Sigmoid colon (tissue), 7 donors: ENCODE measurements at regions of chr12 and their contacts with region 1.

Region 1: GRCh38 chr12:98998697-98999299 is 353.7 kb downstream of the APAF1 start:
- DNase-seq: no peak
- H3K4me3 ChIP-seq: no peak overlapping the region
- H3K27ac ChIP-seq: no peak overlapping the region
- H3K4me1 ChIP-seq: no peaks in the 10 kb centered on the region
- H3K27me3 ChIP-seq: no peaks in the 10 kb centered on the region
- CTCF ChIP-seq: peak in 3 of 4 experiments; percentile 36 to 69 (median 58)
- EP300 ChIP-seq: no peak
- POLR2A ChIP-seq: no peak

Region 2: DNA sequence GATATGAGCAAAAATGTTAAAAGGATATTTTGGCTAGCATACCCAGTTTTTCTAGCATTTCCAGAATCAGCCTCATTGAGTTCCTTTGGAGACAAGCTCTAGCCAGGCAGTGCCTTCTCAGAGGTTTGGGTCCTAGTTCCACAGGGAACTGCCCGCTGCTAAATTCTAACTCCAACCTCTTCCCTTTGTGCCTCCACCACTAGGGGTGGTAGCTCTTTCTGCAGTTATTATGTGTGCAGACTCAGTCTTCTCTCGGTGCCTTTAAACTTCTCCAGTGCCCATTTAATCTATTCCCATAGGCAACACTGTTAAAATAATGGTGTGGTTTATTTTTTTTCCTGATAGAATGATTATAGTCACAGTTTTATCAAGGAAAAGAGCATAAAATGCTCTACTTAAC is 426.8 kb before region 1 on chr12:
- intact Hi-C with region 1: loop called (anchors 5 kb)
- DNase-seq: no peak
- H3K4me3 ChIP-seq: no peak overlapping the region
- H3K27ac ChIP-seq: no peak overlapping the region
- H3K4me1 ChIP-seq: peaks cover 0 to 2% (median 0%) of the 10 kb centered on the region in 4 donors
- H3K27me3 ChIP-seq: no peaks in the 10 kb centered on the region
- CTCF ChIP-seq: no peak
- EP300 ChIP-seq: no peak
- POLR2A ChIP-seq: no peak

Region 3: DNA sequence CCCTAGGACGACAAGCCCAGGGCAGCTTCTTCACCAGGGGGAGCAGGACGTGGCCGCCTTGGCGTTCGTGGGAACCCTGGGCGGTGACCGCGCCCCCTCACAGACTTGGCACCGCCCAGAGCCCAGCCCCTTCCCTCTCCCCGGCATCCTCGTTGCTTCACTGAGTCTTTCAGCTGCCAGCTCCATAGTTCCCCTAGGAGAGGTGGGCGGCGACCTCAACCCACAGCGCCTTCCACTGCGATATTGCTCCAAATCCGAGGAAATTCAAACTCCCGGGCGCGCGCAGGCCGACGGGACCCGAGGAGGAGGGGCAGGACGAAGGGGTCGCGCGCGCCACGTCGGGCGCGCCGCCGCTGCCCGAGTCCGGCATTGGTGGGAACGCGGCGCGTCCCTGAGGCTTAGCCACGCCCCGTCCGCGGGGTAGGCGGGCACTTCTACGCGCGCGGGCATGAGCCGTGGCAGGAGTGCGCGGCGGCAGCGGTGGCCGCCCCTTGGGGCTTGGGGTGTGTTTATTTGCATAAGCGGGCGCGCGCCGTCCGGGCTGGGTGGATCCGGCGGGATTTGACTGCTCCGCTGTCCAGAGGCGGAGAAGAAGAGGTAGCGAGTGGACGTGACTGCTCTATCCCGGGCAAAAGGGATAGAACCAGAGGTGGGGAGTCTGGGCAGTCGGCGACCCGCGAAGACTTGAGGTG is 353.9 kb before region 1 on chr12 and contains the starts of genes APAF1 and IKBIP:
- intact Hi-C with region 1: no loop called
- DNase-seq: peak; percentile 97
- H3K4me3 ChIP-seq: peak within 1 kb of the TSS; percentile 85 to 97 (median 92)
- H3K27ac ChIP-seq: peak within 1 kb of the TSS; percentile 86 to 93 (median 88)
- H3K4me1 ChIP-seq: peaks cover 0 to 33% (median 18%) of the 10 kb centered on the region in 4 donors
- H3K27me3 ChIP-seq: no peaks in the 10 kb centered on the region
- CTCF ChIP-seq: no peak
- EP300 ChIP-seq: no peak
- POLR2A ChIP-seq: peak; percentile 68 to 82
- total RNA-seq, gene APAF1: 6.2 to 14.6 (median 9.4) TPM
- total RNA-seq, gene IKBIP: 6.8 to 15.2 (median 10.8) TPM

Region 4: GRCh38 chr12:98698603-98699463 is 300.0 kb before region 1 on chr12:
- intact Hi-C with region 1: loop called (anchors 2 kb)
- DNase-seq: peak; percentile 71
- H3K4me3 ChIP-seq: no peak overlapping the region
- H3K27ac ChIP-seq: peak overlapping the region in 2 of 4 donors; percentile 3 to 30
- H3K4me1 ChIP-seq: peaks cover 0 to 19% (median 10%) of the 10 kb centered on the region in 4 donors
- H3K27me3 ChIP-seq: no peaks in the 10 kb centered on the region
- CTCF ChIP-seq: peak in 3 of 4 experiments; percentile 18 to 54 (median 49)
- EP300 ChIP-seq: no peak
- POLR2A ChIP-seq: no peak

Region 5: GRCh38 chr12:98725476-98726247 is 273.1 kb before region 1 on chr12:
- intact Hi-C with region 1: loop called (anchors 10 kb)
- DNase-seq: no peak
- H3K4me3 ChIP-seq: no peak overlapping the region
- H3K27ac ChIP-seq: no peak overlapping the region
- H3K4me1 ChIP-seq: peaks cover 0 to 5% (median 0%) of the 10 kb centered on the region in 4 donors
- H3K27me3 ChIP-seq: no peaks in the 10 kb centered on the region
- CTCF ChIP-seq: peak in 1 of 4 experiments; percentile 23
- EP300 ChIP-seq: no peak
- POLR2A ChIP-seq: no peak